Activated CD4-positive, alpha-beta T cell treated with anti-CD3 and anti-CD28 coated beads for 36 hours (primary cell): ENCODE measurements at regions of chr6 and their contacts with region 1.

Region 1: DNA sequence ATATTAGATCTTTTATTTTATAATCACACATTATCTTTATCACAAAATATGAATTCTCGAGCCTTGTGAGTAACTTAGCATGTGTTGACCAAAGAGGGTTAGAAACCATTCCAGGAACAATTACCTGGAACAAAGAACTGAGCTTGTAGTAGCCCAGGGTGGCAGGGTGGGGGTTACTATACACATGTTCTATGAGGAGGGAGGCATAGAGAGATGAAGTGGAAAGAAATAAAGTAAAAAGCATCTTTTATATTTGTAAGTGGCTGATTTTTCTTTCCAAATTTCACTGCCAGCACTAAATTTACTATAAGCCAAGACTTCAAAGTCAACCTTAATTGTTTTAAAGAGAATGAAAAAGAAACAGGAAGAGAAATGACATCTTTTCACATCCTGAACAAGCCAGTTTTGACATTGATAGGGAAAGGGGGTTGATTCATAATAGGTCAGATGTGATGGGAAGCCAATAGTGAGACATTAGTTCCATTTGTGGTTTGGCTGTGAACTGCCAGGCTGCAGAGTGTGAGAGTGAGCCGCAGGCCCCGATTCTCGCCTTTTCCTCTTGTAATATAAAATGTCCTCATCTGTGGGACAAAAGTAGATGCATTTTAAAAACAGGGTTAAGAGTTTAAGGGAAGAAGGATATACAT is 52.7 kb upstream of the MYB start:
- DNase-seq: peak; percentile 83
- ATAC-seq: peak; percentile 97
- H3K4me3 Mint-ChIP-seq: peak overlapping the region; percentile 54
- H3K27ac Mint-ChIP-seq: peak overlapping the region; percentile 87
- H3K4me1 Mint-ChIP-seq: peaks cover 44% of the 10 kb centered on the region
- H3K27me3 Mint-ChIP-seq: no peaks in the 10 kb centered on the region

Region 2: GRCh38 chr6:134925800-134926199 is 202.6 kb before region 1 on chr6:
- CTCF ChIA-PET with region 1: no interaction called
- POLR2A ChIA-PET with region 1: no interaction called
- intact Hi-C with region 1: no loop called
- DNase-seq: no peak
- ATAC-seq: no peak
- H3K4me3 Mint-ChIP-seq: no peak overlapping the region
- H3K27ac Mint-ChIP-seq: no peak overlapping the region
- H3K4me1 Mint-ChIP-seq: no peaks in the 10 kb centered on the region
- H3K27me3 Mint-ChIP-seq: no peaks in the 10 kb centered on the region

Region 3: GRCh38 chr6:135014353-135014832 is 114.0 kb before region 1 on chr6:
- CTCF ChIA-PET with region 1: no interaction called
- POLR2A ChIA-PET with region 1: no interaction called
- intact Hi-C with region 1: no loop called
- DNase-seq: peak; percentile 23
- ATAC-seq: peak; percentile 87
- H3K4me3 Mint-ChIP-seq: peak overlapping the region; percentile 18
- H3K27ac Mint-ChIP-seq: peak overlapping the region; percentile 45
- H3K4me1 Mint-ChIP-seq: peaks cover 59% of the 10 kb centered on the region
- H3K27me3 Mint-ChIP-seq: no peaks in the 10 kb centered on the region

Region 4: DNA sequence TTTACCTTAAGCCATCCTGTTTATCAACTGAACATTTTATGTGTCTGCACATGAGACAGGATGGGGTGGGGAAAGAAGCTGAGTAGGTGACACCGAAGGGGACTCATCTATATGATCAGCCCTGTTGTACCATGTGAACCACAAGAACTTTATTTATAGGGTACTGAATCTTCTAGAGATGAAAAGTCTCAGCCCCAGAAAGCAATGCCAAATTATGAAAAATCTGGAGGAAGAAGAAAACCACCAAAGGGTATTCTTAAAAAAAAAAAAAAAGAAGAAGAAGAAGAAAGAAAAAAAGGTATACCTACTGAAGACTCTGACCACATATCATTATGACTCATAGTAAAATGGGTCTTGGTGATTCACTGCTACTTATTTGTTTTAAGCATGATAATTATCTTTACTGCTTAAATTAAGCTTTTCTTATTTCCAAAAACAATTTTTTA is 34.0 kb before region 1 on chr6:
- CTCF ChIA-PET with region 1: no interaction called
- POLR2A ChIA-PET with region 1: interaction called, 3 read pairs
- intact Hi-C with region 1: loop called in 1 of 2 experiments (anchors 1 kb)
- DNase-seq: peak; percentile 56
- ATAC-seq: peak; percentile 89
- H3K4me3 Mint-ChIP-seq: no peak overlapping the region
- H3K27ac Mint-ChIP-seq: peak overlapping the region; percentile 79
- H3K4me1 Mint-ChIP-seq: peaks cover 57% of the 10 kb centered on the region
- H3K27me3 Mint-ChIP-seq: no peaks in the 10 kb centered on the region

Region 5: DNA sequence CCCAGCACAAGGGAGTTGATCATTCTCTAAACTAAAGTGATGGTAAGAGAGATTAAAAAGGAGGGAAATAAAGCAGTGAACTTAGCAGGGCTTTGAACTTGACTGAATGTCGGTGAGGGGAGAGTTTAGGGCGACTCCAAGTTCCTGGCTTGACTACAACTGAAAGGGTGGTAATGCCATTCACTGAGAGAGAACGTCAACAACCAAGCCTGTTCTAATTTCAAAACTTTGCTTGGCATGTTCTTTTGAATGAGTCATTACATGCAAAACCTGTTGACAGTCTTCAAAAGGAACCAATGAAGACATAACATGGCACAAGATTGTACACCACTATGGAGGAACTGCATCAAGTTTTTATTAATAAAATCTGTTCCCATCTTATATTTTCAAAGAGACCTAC is 42.5 kb after region 1 on chr6:
- CTCF ChIA-PET with region 1: no interaction called
- POLR2A ChIA-PET with region 1: no interaction called
- intact Hi-C with region 1: loop called in 1 of 2 experiments (anchors 1 kb)
- DNase-seq: peak; percentile 63
- ATAC-seq: peak; percentile 89
- H3K4me3 Mint-ChIP-seq: peak overlapping the region; percentile 20
- H3K27ac Mint-ChIP-seq: peak overlapping the region; percentile 88
- H3K4me1 Mint-ChIP-seq: peaks cover 25% of the 10 kb centered on the region
- H3K27me3 Mint-ChIP-seq: no peaks in the 10 kb centered on the region

Region 6: GRCh38 chr6:135360222-135360621 is 231.8 kb after region 1 on chr6:
- CTCF ChIA-PET with region 1: no interaction called
- POLR2A ChIA-PET with region 1: no interaction called
- intact Hi-C with region 1: no loop called
- DNase-seq: no peak
- ATAC-seq: no peak
- H3K4me3 Mint-ChIP-seq: no peak overlapping the region
- H3K27ac Mint-ChIP-seq: no peak overlapping the region
- H3K4me1 Mint-ChIP-seq: peaks cover 7% of the 10 kb centered on the region
- H3K27me3 Mint-ChIP-seq: no peaks in the 10 kb centered on the region